ENCODE measurements at regions of chr11 and their contacts with region 1.

Region 1: DNA sequence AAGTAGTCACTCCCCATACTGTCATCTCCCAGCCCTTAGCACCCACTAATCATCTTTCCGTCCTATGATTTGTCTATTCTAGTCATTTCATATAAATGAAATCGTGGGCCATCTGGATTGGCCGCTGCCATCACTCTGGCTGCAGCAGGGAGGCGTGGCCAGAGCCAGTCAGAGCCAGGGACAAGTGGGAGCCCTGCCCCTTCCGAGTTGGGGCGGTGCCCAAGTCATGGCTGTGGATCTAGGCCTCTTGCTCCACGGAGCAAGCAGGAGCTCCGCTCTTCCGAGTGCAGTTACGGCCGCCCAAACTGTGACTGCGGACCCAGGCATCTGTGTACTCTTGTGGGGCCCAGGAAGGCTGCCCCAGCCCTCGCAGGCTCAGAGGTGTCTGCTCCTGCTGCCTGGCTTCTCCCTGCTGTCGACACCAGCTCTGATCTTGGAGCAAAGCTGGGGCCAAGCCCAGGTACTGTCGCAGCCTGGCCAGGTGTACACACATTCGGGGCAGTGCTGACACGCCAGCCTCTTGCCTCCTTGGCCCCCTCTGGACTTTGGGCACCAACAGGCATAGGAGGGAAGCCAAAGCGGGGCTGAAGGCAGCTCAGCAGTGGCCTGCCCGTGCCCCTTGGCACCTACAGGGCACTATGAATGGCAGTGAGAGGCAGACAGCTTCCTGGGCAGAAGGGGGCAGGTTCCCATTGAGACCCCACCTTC is 8.4 kb downstream of the MRPL48 start:
- DNase-seq: no peak
- ATAC-seq: no peak
- H3K4me3 Mint-ChIP-seq: no peak overlapping the region
- H3K27ac Mint-ChIP-seq: no peak overlapping the region
- H3K4me1 Mint-ChIP-seq: peaks cover 4% of the 10 kb centered on the region
- H3K27me3 Mint-ChIP-seq: no peaks in the 10 kb centered on the region

Region 2: GRCh38 chr11:73121692-73122091 is 674.4 kb before region 1 on chr11:
- CTCF ChIA-PET with region 1: no interaction called
- POLR2A ChIA-PET with region 1: interaction called, 10 read pairs
- intact Hi-C with region 1: no loop called
- DNase-seq: no peak
- ATAC-seq: no peak
- H3K4me3 Mint-ChIP-seq: no peak overlapping the region
- H3K27ac Mint-ChIP-seq: no peak overlapping the region
- H3K4me1 Mint-ChIP-seq: no peaks in the 10 kb centered on the region
- H3K27me3 Mint-ChIP-seq: no peaks in the 10 kb centered on the region

Region 3: GRCh38 chr11:73995247-73995646 is 199.2 kb after region 1 on chr11:
- CTCF ChIA-PET with region 1: no interaction called
- POLR2A ChIA-PET with region 1: no interaction called
- intact Hi-C with region 1: no loop called
- DNase-seq: no peak
- ATAC-seq: peak; percentile 80
- H3K4me3 Mint-ChIP-seq: peak overlapping the region; percentile 37
- H3K27ac Mint-ChIP-seq: peak overlapping the region; percentile 92
- H3K4me1 Mint-ChIP-seq: peaks cover 72% of the 10 kb centered on the region
- H3K27me3 Mint-ChIP-seq: no peaks in the 10 kb centered on the region

Region 4: DNA sequence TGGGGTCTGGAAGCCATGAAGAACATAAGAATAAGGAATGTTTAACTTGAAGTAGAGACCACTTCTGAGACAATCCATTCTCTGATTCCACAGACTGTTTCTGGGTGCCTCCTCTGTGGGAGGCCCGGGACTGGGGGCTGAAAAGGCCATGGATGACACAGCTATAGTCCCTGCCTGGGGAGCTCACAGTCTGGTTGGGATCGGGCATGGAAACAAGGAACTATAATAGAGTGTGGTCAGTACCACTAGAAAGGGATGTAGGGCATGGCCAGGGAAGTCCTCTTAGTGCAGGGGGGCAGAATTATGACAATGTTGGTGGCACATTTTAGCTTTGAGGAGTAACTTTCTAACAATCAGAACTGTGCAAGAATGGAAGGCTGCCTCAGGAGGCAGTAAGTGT is 680.5 kb after region 1 on chr11:
- CTCF ChIA-PET with region 1: no interaction called
- POLR2A ChIA-PET with region 1: no interaction called
- intact Hi-C with region 1: no loop called
- DNase-seq: no peak
- ATAC-seq: no peak
- H3K4me3 Mint-ChIP-seq: no peak overlapping the region
- H3K27ac Mint-ChIP-seq: no peak overlapping the region
- H3K4me1 Mint-ChIP-seq: peaks cover 8% of the 10 kb centered on the region
- H3K27me3 Mint-ChIP-seq: peaks cover 2% of the 10 kb centered on the region